ENCODE measurements at regions of chr18 and their contacts with region 1.

Region 1: DNA sequence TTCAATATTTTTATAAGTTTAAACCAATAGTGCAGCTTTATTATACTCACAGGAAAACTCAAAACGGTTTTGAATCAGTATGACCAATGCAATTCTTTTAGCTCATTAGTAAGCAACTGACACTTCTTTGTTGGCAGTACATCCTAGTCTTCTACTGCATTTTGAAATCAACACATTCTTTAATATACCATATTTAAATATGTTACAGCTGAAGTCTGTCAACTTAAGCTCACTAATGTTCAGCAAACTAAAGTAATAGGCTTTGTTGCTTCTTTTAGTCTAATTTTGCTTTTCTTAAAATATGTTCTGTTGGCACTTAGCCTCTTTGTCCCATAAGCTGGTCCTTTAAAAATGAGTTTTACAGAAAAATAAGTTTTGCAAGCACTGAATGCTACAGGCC is 55.4 kb upstream of the CCBE1 start:
- DNase-seq: no peak
- H3K4me3 ChIP-seq: no peak overlapping the region
- H3K27ac ChIP-seq: no peak overlapping the region
- H3K4me1 ChIP-seq: no peaks in the 10 kb centered on the region
- H3K27me3 ChIP-seq: no peaks in the 10 kb centered on the region
- CTCF ChIP-seq: no peak

Region 2: DNA sequence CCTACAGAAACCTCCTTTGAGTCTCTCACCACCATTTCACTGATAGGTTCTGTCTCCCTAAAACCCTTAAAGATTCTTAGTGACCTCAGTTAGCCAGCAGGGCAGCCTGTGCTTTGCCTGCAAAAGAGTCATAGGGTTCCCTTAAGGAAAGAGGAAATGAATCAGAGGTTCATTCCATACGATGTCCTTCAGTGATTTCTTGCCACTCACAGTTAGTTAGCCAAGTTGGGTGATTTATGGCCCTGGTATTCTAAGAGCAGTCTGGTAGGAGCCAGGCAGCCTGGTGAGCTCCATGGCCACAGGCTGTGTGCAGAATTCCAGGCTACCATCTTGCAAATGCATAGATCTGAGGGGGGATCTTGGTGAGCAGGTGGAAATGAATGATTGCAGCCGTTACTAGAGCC is 36.7 kb before region 1 on chr18:
- intact Hi-C with region 1: loop called (anchors 5 kb)
- DNase-seq: no peak
- H3K4me3 ChIP-seq: no peak overlapping the region
- H3K27ac ChIP-seq: peak overlapping the region in 1 of 2 donors; percentile 14
- H3K4me1 ChIP-seq: no peaks in the 10 kb centered on the region
- H3K27me3 ChIP-seq: no peaks in the 10 kb centered on the region
- CTCF ChIP-seq: no peak

Region 3: GRCh38 chr18:60120231-60120750 is 367.6 kb after region 1 on chr18:
- intact Hi-C with region 1: no loop called
- DNase-seq: no peak
- H3K4me3 ChIP-seq: no peak overlapping the region
- H3K27ac ChIP-seq: no peak overlapping the region
- H3K4me1 ChIP-seq: no peaks in the 10 kb centered on the region
- H3K27me3 ChIP-seq: no peaks in the 10 kb centered on the region
- CTCF ChIP-seq: no peak

Measured in ascending aorta (tissue), 2 donors.